ENCODE measurements at regions of chr7 and their contacts with region 1.

Region 1: DNA sequence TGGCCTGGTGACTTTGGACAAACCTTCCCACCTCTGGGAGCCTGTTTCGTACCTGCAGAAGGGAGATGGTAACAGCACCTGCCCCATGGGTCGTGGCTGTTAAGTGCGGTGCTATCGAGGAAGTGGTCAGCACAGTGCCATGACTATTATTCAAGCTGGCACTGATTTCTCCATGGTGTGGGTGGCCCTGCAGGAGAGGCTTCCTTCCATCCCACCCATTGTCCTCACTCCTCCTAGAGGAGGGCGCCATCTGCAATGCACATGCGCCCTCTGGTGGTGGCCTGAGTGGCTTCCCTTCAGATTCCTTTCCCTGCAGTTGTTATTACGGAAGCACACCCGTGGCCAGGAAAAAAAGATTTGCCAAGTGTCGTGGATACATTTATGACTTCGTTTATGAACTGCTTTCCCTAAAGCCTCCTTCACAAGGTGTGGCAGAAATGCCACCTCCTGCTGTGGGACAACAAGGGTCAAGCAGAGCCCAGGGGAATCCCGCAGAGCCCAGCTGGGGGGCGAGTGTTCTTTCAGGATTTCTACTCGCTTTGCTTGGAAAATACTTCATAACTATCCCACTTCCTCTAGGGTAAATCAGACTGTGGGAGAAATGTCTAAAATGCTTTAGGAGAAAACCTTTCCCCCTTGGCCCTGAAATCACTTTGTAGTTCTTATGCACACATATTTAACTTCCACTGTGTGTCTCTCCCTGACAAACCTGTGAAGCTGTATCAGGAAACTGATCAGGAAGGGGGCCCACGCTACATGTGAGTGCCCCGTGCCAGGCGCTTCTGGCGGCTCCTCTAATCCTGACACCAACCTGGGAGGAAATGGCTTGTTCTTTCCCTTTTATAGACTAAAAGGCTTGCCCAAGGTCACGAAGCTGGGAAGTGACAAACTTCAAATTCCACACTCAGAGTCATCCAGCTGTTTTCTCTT is 98.0 kb upstream of the ANLN start:
- DNase-seq: peak; percentile 86 to 92 (median 90)
- H3K4me3 ChIP-seq: peak overlapping the region; percentile 40
- H3K27ac ChIP-seq: peak overlapping the region; percentile 65 to 89
- H3K4me1 ChIP-seq: peaks cover 5% of the 10 kb centered on the region
- H3K27me3 ChIP-seq: no peaks in the 10 kb centered on the region
- CTCF ChIP-seq: peak; percentile 93 to 97 (median 97)
- EP300 ChIP-seq: no peak
- POLR2A ChIP-seq: no peak

Region 2: GRCh38 chr7:35985126-35985754 is 306.4 kb before region 1 on chr7:
- intact Hi-C with region 1: loop called (anchors 1 to 5 kb)
- DNase-seq: peak; percentile 70 to 86 (median 82)
- H3K4me3 ChIP-seq: no peak overlapping the region
- H3K27ac ChIP-seq: no peak overlapping the region
- H3K4me1 ChIP-seq: peaks cover 3% of the 10 kb centered on the region
- H3K27me3 ChIP-seq: no peaks in the 10 kb centered on the region
- CTCF ChIP-seq: peak; percentile 57 to 87 (median 86)
- EP300 ChIP-seq: no peak
- POLR2A ChIP-seq: no peak

Region 3: GRCh38 chr7:36128448-36129047 is 163.1 kb before region 1 on chr7:
- intact Hi-C with region 1: loop called in 1 of 4 experiments (anchors 5 kb)
- DNase-seq: peak; percentile 75 to 83 (median 77)
- H3K4me3 ChIP-seq: no peak overlapping the region
- H3K27ac ChIP-seq: no peak overlapping the region
- H3K4me1 ChIP-seq: no peaks in the 10 kb centered on the region
- H3K27me3 ChIP-seq: no peaks in the 10 kb centered on the region
- CTCF ChIP-seq: peak; percentile 39 to 59 (median 48)
- EP300 ChIP-seq: no peak
- POLR2A ChIP-seq: no peak

Region 4: DNA sequence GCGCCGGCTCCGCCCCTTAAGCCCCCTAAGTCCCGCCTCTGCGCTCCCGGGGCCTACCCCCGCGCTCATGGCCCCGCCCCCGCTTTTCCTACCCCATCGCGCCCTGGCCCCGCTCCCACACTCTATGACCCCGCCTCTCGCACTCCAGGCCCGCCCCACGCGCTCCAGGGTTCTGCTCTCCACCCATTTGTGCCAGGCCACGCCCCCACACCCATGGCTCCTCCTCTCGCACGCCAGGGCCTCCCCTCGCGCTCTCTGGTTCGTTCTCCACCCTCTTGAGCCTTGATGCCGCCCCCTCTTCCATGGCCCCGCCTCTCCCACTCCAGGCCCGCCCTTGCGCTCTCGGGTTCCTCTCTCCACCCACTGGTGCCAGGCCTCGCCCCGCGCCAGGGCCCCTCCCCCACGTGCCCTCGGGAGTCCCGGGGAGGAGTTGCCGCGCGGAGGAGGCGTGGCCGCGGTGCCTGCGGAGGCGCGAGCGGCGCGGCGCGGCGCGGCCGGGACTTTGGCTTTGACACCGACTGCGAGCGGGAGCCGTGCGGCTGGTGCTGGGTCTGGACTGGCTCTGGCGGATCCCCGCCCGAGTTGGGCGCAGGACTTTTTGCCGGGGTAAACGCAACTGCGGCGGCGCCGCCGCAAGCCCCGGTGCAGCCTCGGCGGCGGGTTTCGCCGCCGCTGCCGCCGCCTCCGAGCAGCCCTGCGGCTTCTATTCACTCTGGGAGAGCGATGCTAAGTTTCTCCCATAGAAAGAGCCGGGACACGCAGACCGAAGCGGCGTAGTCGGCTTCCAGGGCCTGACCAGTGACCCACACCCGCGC is 138.7 kb before region 1 on chr7 and contains the start of gene EEPD1:
- intact Hi-C with region 1: loop called in 2 of 4 experiments (anchors 5 to 10 kb)
- DNase-seq: peak; percentile 100
- H3K4me3 ChIP-seq: peak within 1 kb of the TSS; percentile 90
- H3K27ac ChIP-seq: peak within 1 kb of the TSS; percentile 62 to 77
- H3K4me1 ChIP-seq: peaks cover 23% of the 10 kb centered on the region
- H3K27me3 ChIP-seq: no peaks in the 10 kb centered on the region
- CTCF ChIP-seq: no peak
- EP300 ChIP-seq: no peak
- POLR2A ChIP-seq: peak; percentile 46
- total RNA-seq, gene EEPD1: 5.6 to 15.8 (median 10.7) TPM

Region 5: DNA sequence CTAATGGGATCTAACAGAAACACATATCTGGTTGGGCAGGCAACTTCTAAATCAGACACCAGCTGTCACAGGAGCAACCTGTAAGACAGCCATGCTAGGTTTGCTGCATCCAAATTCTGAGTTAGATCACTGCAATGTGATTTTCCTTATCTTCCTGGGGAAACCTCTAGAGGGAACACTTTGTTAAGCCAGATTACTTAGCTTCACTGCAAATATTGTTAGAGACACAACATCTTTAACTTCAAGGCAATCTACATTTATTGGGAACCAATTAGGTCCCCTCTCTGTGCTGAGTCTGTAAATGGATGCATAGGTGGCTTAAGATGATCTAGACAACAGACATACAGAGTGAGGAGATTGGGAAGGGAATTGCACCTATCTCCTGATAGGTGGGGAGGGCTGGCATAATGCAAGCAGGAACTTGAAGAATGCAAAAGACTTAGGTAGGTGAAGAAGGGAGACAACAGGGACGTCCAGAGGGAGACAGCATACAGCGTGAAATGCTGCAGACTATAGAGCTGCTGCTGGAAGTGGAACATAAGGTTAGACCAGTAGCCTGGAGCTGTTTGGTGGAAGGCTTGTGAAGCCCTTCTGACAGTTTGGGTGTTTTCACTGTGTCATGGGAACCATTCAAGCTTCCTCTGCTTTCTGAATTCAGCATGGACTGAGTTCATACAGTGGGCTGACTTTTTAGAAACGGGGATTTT is 1266.8 kb after region 1 on chr7:
- intact Hi-C with region 1: no loop called
- DNase-seq: no peak
- H3K4me3 ChIP-seq: no peak overlapping the region
- H3K27ac ChIP-seq: no peak overlapping the region
- H3K4me1 ChIP-seq: no peaks in the 10 kb centered on the region
- H3K27me3 ChIP-seq: no peaks in the 10 kb centered on the region
- CTCF ChIP-seq: no peak
- EP300 ChIP-seq: no peak
- POLR2A ChIP-seq: no peak